H1 (cell line): ENCODE measurements at regions of chr6 and their contacts with region 1.

Region 1: GRCh38 chr6:50602292-50602691 is 111.0 kb upstream of the TFAP2D start:
- DNase-seq: no peak
- H3K4me3 ChIP-seq: no peak overlapping the region
- H3K27ac ChIP-seq: no peak overlapping the region
- H3K4me1 ChIP-seq: no peaks in the 10 kb centered on the region
- H3K27me3 ChIP-seq: no peaks in the 10 kb centered on the region
- CTCF ChIP-seq: peak in 2 of 3 experiments; percentile 45 to 57; a peak in 2 of 4 replicates
- EP300 ChIP-seq: no peak
- POLR2A ChIP-seq: no peak
- RAD21 ChIP-seq: peak; percentile 70 to 74

Region 2: GRCh38 chr6:50264995-50265571 is 337.2 kb before region 1 on chr6:
- CTCF ChIA-PET with region 1: interaction called, 28 read pairs
- POLR2A ChIA-PET with region 1: no interaction called
- DNase-seq: no peak
- H3K4me3 ChIP-seq: no peak overlapping the region
- H3K27ac ChIP-seq: no peak overlapping the region
- H3K4me1 ChIP-seq: no peaks in the 10 kb centered on the region
- H3K27me3 ChIP-seq: no peaks in the 10 kb centered on the region
- CTCF ChIP-seq: peak in 2 of 3 experiments; percentile 63 to 67; a peak in 3 of 4 replicates
- EP300 ChIP-seq: no peak
- POLR2A ChIP-seq: no peak
- RAD21 ChIP-seq: peak; percentile 68

Region 3: GRCh38 chr6:50591135-50591534 is 11.2 kb before region 1 on chr6:
- CTCF ChIA-PET with region 1: interaction called, 13 read pairs
- POLR2A ChIA-PET with region 1: no interaction called
- DNase-seq: no peak
- H3K4me3 ChIP-seq: no peak overlapping the region
- H3K27ac ChIP-seq: no peak overlapping the region
- H3K4me1 ChIP-seq: no peaks in the 10 kb centered on the region
- H3K27me3 ChIP-seq: no peaks in the 10 kb centered on the region
- CTCF ChIP-seq: no peak
- EP300 ChIP-seq: no peak
- POLR2A ChIP-seq: no peak
- RAD21 ChIP-seq: no peak

Region 4: GRCh38 chr6:50699051-50699775 is 96.9 kb after region 1 on chr6:
- CTCF ChIA-PET with region 1: no interaction called
- POLR2A ChIA-PET with region 1: no interaction called
- DNase-seq: no peak
- H3K4me3 ChIP-seq: no peak overlapping the region
- H3K27ac ChIP-seq: no peak overlapping the region
- H3K4me1 ChIP-seq: peaks cover 0 to 2% (median 0%) of the 10 kb centered on the region in 4 experiments; a peak in 1 of 7 replicates
- H3K27me3 ChIP-seq: peaks cover 0 to 8% (median 4%) of the 10 kb centered on the region in 4 experiments; a peak in 3 of 7 replicates
- CTCF ChIP-seq: no peak
- EP300 ChIP-seq: no peak
- POLR2A ChIP-seq: no peak
- RAD21 ChIP-seq: no peak